ENCODE measurements at regions of chr12 and their contacts with region 1.

Region 1: DNA sequence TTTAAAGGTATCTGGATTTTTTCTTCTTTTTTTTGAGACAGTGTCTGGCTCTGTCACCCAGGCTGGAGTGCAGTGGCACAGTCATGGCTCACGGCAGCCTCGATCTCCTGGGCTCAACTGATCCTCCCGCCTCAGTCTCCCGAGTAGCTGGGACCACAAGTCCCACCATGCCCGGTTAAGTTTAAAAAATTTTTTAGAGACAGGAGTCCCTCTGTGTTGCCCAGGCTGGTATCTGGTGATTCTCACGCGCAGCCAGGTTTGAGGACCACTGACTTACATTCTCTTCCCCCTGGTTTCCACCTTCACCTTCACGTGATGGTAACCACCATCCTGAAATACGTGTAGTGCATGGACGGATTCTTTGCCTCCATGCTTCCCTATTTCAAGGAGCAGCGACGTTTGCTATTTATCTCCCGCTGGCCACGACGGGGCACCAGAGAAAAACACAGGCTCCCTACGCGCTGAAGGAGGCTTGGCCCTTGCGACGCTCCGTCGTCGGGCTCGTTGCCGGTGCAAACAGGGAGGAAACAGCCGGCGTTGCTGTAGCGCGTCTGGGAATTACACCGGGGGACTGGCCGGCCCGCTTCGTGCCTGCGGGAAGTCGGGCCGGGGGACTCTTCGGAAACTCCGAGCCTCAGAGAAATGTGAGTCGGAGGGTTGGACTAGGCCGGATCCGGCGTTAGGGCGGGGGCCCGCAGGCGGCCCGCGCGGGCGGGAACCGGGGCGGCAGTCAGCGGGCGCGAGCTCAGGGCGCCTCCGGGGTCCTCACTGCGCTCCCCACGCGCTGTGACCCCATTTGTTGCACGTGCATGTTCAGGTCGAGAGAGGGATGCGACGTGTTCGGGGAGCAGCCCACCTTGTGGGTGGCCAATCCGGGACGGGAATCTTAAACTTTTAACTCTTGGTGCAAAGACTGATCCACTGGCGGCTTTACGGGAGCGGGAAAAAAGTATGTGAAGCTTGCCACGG is at the start of gene TCHP:
- DNase-seq: peak; percentile 71 to 76
- H3K4me3 ChIP-seq: peak within 1 kb of the TSS; percentile 73
- H3K27ac ChIP-seq: peak within 1 kb of the TSS; percentile 30; the same call in 1 of the 2 replicates
- H3K4me1 ChIP-seq: peaks cover 16% of the 10 kb centered on the region
- H3K27me3 ChIP-seq: no peaks in the 10 kb centered on the region
- CTCF ChIP-seq: peak; percentile 33; the same call in 1 of the 2 replicates
- total RNA-seq, gene TCHP: 17.6 and 19.2 TPM in 2 replicates

Region 2: GRCh38 chr12:109858764-109859163 is 41.3 kb before region 1 on chr12:
- CTCF ChIA-PET with region 1: interaction called, 4 read pairs
- POLR2A ChIA-PET with region 1: no interaction called
- intact Hi-C with region 1: loop called (anchors 1 kb)
- DNase-seq: no peak
- H3K4me3 ChIP-seq: no peak overlapping the region
- H3K27ac ChIP-seq: no peak overlapping the region
- H3K4me1 ChIP-seq: peaks cover 8% of the 10 kb centered on the region
- H3K27me3 ChIP-seq: no peaks in the 10 kb centered on the region
- CTCF ChIP-seq: no peak

Measured in PC-9 (cell line).